ENCODE measurements at regions of chr5 and their contacts with region 1.

Region 1: GRCh38 chr5:135466178-135467050 is 14.3 kb upstream of the TIFAB start:
- DNase-seq: peak; percentile 30 to 77 (median 64)
- ATAC-seq: peak; percentile 81
- H3K4me3 ChIP-seq: peak overlapping the region in 1 of 2 experiments; percentile 33
- H3K4me3 Mint-ChIP-seq: peak overlapping the region; percentile 66
- H3K27ac ChIP-seq: no peak overlapping the region
- H3K27ac Mint-ChIP-seq: no peak overlapping the region
- H3K4me1 ChIP-seq: no peaks in the 10 kb centered on the region
- H3K4me1 Mint-ChIP-seq: peaks cover 8% of the 10 kb centered on the region
- H3K27me3 ChIP-seq: peaks cover 5 to 11% of the 10 kb centered on the region in 2 experiments
- H3K27me3 Mint-ChIP-seq: peaks cover 40% of the 10 kb centered on the region
- CTCF ChIP-seq: peak; percentile 62

Region 2: GRCh38 chr5:135271533-135272310 is 194.7 kb before region 1 on chr5:
- CTCF ChIA-PET with region 1: no interaction called
- POLR2A ChIA-PET with region 1: no interaction called
- intact Hi-C with region 1: no loop called
- DNase-seq: no peak
- ATAC-seq: no peak
- H3K4me3 ChIP-seq: no peak overlapping the region
- H3K4me3 Mint-ChIP-seq: no peak overlapping the region
- H3K27ac ChIP-seq: no peak overlapping the region
- H3K27ac Mint-ChIP-seq: no peak overlapping the region
- H3K4me1 ChIP-seq: no peaks in the 10 kb centered on the region
- H3K4me1 Mint-ChIP-seq: no peaks in the 10 kb centered on the region
- H3K27me3 ChIP-seq: no peaks in the 10 kb centered on the region
- H3K27me3 Mint-ChIP-seq: no peaks in the 10 kb centered on the region
- CTCF ChIP-seq: no peak

Region 3: DNA sequence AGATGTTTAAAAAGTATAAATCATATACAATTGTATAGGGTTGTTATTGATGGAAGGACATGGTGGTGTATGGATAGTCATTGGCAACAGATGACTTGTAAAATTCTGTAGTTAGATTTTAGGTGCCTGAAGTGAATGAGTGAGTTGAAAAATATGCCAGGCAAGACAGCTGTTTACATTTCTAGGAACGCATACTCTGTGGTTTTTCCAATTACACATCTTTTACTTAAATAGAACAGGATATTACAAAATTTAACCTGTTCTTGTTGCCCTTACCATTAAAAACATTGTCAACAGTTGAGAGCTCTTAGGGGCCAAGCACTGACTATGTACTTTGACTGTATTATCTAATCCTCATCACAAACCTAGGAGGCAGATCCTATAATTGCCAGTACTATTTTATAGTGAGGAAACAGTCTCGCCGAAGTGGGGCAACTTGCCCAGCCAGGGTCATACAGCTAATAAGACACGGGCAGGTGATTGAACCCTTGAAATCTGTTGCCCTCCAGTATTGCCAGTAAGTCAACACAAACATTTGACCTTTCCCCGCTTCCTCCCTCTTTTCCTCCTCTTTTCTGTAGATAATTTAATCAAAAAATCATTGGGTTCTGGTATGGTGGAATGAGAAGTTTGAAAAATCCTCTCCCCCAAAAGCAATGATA is 156.0 kb before region 1 on chr5:
- CTCF ChIA-PET with region 1: no interaction called
- POLR2A ChIA-PET with region 1: no interaction called
- intact Hi-C with region 1: no loop called
- DNase-seq: no peak
- ATAC-seq: no peak
- H3K4me3 ChIP-seq: no peak overlapping the region
- H3K4me3 Mint-ChIP-seq: no peak overlapping the region
- H3K27ac ChIP-seq: no peak overlapping the region
- H3K27ac Mint-ChIP-seq: no peak overlapping the region
- H3K4me1 ChIP-seq: no peaks in the 10 kb centered on the region
- H3K4me1 Mint-ChIP-seq: peaks cover 4% of the 10 kb centered on the region
- H3K27me3 ChIP-seq: no peaks in the 10 kb centered on the region
- H3K27me3 Mint-ChIP-seq: peaks cover 9% of the 10 kb centered on the region
- CTCF ChIP-seq: no peak

Region 4: GRCh38 chr5:135476615-135477582 is 10.5 kb after region 1 on chr5:
- CTCF ChIA-PET with region 1: interaction called, 16 read pairs
- POLR2A ChIA-PET with region 1: no interaction called
- intact Hi-C with region 1: no loop called
- DNase-seq: no peak
- ATAC-seq: no peak
- H3K4me3 ChIP-seq: no peak overlapping the region
- H3K4me3 Mint-ChIP-seq: no peak overlapping the region
- H3K27ac ChIP-seq: no peak overlapping the region
- H3K27ac Mint-ChIP-seq: no peak overlapping the region
- H3K4me1 ChIP-seq: no peaks in the 10 kb centered on the region
- H3K4me1 Mint-ChIP-seq: no peaks in the 10 kb centered on the region
- H3K27me3 ChIP-seq: peaks cover 0 to 2% of the 10 kb centered on the region in 2 experiments
- H3K27me3 Mint-ChIP-seq: peaks cover 25% of the 10 kb centered on the region
- CTCF ChIP-seq: no peak

Region 5: GRCh38 chr5:135560858-135561257 is 94.4 kb after region 1 on chr5:
- CTCF ChIA-PET with region 1: interaction called, 92 read pairs
- POLR2A ChIA-PET with region 1: no interaction called
- intact Hi-C with region 1: loop called (anchors 1 kb)
- DNase-seq: peak; percentile 24 to 69 (median 58)
- ATAC-seq: peak; percentile 62
- H3K4me3 ChIP-seq: no peak overlapping the region
- H3K4me3 Mint-ChIP-seq: no peak overlapping the region
- H3K27ac ChIP-seq: no peak overlapping the region
- H3K27ac Mint-ChIP-seq: no peak overlapping the region
- H3K4me1 ChIP-seq: no peaks in the 10 kb centered on the region
- H3K4me1 Mint-ChIP-seq: peaks cover 5% of the 10 kb centered on the region
- H3K27me3 ChIP-seq: no peaks in the 10 kb centered on the region
- H3K27me3 Mint-ChIP-seq: peaks cover 34% of the 10 kb centered on the region
- CTCF ChIP-seq: peak; percentile 61

Region 6: GRCh38 chr5:136080483-136081216 is 614.2 kb after region 1 on chr5:
- CTCF ChIA-PET with region 1: no interaction called
- POLR2A ChIA-PET with region 1: no interaction called
- intact Hi-C with region 1: loop called in 1 of 2 experiments (anchors 10 kb)
- DNase-seq: peak; percentile 10 to 75 (median 44)
- ATAC-seq: peak; percentile 96
- H3K4me3 ChIP-seq: peak overlapping the region; percentile 19 to 39
- H3K4me3 Mint-ChIP-seq: peak overlapping the region; percentile 77
- H3K27ac ChIP-seq: no peak overlapping the region
- H3K27ac Mint-ChIP-seq: peak overlapping the region; percentile 13
- H3K4me1 ChIP-seq: peaks cover 2% of the 10 kb centered on the region
- H3K4me1 Mint-ChIP-seq: peaks cover 4% of the 10 kb centered on the region
- H3K27me3 ChIP-seq: no peaks in the 10 kb centered on the region
- H3K27me3 Mint-ChIP-seq: peaks cover 30% of the 10 kb centered on the region
- CTCF ChIP-seq: no peak

Measured in CD8-positive, alpha-beta T cell (primary cell).